ENCODE measurements at regions of chr2 and their contacts with region 1.

Region 1: GRCh38 chr2:210195101-210195852 is 24.1 kb upstream of the KANSL1L start:
- DNase-seq: peak; percentile 54
- H3K4me3 ChIP-seq: peak overlapping the region in 3 of 4 donors; percentile 19 to 32 (median 30)
- H3K27ac ChIP-seq: no peak overlapping the region
- H3K4me1 ChIP-seq: peaks cover 0 to 6% (median 3%) of the 10 kb centered on the region in 4 donors
- H3K27me3 ChIP-seq: no peaks in the 10 kb centered on the region
- CTCF ChIP-seq: peak; percentile 10 to 76 (median 62)
- EP300 ChIP-seq: no peak
- POLR2A ChIP-seq: no peak

Region 2: GRCh38 chr2:209334198-209335017 is 860.9 kb before region 1 on chr2:
- intact Hi-C with region 1: loop called (anchors 10 kb)
- DNase-seq: no peak
- H3K4me3 ChIP-seq: no peak overlapping the region
- H3K27ac ChIP-seq: no peak overlapping the region
- H3K4me1 ChIP-seq: peaks cover 0 to 5% (median 2%) of the 10 kb centered on the region in 4 donors
- H3K27me3 ChIP-seq: no peaks in the 10 kb centered on the region
- CTCF ChIP-seq: peak in 3 of 4 experiments; percentile 49 to 81 (median 55)
- EP300 ChIP-seq: no peak
- POLR2A ChIP-seq: no peak

Region 3: GRCh38 chr2:209423562-209424198 is 771.6 kb before region 1 on chr2 and contains the start of gene MAP2:
- intact Hi-C with region 1: loop called (anchors 10 kb)
- DNase-seq: peak; percentile 86
- H3K4me3 ChIP-seq: peak within 1 kb of the TSS; percentile 40 to 60 (median 55)
- H3K27ac ChIP-seq: peak within 1 kb of the TSS in 2 of 4 donors; percentile 35 to 64
- H3K4me1 ChIP-seq: peaks cover 0 to 17% (median 15%) of the 10 kb centered on the region in 4 donors
- H3K27me3 ChIP-seq: no peaks in the 10 kb centered on the region
- CTCF ChIP-seq: peak; percentile 17 to 88 (median 36)
- EP300 ChIP-seq: no peak
- POLR2A ChIP-seq: no peak
- total RNA-seq, gene MAP2: 8.4 to 21.8 (median 13.0) TPM

Region 4: DNA sequence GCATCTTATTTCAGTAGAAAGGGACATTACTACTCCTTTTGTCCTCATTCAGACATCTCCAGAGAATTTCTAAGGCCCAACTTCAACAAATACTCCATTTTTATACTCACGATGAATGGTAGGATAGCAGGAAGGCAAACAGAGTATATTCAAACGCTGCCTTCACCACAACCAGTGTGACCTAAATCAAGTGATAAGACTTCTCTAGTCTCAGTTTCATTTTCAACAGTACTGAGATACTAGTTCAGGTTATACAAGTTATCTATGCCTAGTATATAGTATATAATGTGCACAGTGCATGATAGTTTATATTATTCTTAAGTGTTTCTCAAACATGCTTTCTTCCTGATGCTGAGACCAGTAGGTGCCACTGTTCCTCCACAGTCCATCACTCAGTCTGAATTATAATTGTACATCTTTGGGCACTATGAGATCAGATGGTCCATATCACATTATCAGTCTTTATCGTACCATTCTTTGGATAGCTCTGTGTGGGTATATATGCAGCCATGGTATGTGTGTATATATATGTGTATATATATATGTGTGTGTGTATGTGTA is 259.1 kb before region 1 on chr2:
- intact Hi-C with region 1: loop called (anchors 5 kb)
- DNase-seq: no peak
- H3K4me3 ChIP-seq: no peak overlapping the region
- H3K27ac ChIP-seq: no peak overlapping the region
- H3K4me1 ChIP-seq: peaks cover 0 to 14% (median 9%) of the 10 kb centered on the region in 4 donors
- H3K27me3 ChIP-seq: no peaks in the 10 kb centered on the region
- CTCF ChIP-seq: peak in 1 of 4 experiments; percentile 5
- EP300 ChIP-seq: no peak
- POLR2A ChIP-seq: no peak

Region 5: DNA sequence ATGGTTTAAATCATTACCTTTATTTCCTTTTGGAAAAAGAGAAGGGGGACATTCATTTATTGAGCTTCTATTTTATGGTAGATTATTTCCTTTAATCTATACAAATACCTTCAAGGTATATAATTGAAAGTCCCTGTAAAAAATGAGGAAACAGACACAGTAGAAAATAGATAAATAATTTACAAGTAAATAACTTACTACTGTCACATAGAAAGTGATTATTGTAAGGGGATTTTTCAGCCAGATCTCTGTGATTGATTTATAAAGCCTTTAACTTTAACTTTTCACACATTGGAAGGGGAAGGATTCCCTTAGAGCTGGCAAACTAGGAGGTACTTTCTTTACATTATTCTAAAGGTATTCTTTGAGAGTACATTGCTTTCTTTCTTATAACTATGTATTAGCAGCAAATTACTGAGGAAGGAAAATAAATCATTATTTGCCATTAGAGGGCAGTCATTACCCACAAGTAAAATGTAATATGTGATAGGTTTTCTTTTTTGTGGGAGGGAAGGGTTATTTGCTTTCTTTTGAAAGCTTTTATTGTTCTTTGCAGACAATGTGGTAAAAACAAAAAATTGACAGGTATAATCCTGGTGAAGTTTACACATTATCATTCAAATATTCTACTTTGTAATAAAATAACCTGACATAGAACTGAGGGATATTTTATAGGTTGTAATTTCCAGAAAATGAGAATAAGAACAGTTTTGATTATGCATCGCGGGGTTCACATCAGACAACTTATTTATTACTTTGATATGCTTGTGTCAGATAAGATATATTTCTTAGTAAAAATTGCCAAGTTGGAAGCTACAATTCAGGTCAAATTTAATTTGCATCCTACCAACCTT is 217.7 kb before region 1 on chr2:
- intact Hi-C with region 1: loop called (anchors 1 kb)
- DNase-seq: no peak
- H3K4me3 ChIP-seq: no peak overlapping the region
- H3K27ac ChIP-seq: no peak overlapping the region
- H3K4me1 ChIP-seq: peaks cover 0 to 16% (median 10%) of the 10 kb centered on the region in 4 donors
- H3K27me3 ChIP-seq: no peaks in the 10 kb centered on the region
- CTCF ChIP-seq: peak in 3 of 4 experiments; percentile 28 to 52 (median 39)
- EP300 ChIP-seq: no peak
- POLR2A ChIP-seq: no peak

Region 6: GRCh38 chr2:210072922-210073509 is 122.3 kb before region 1 on chr2:
- intact Hi-C with region 1: loop called (anchors 5 kb)
- DNase-seq: no peak
- H3K4me3 ChIP-seq: no peak overlapping the region
- H3K27ac ChIP-seq: no peak overlapping the region
- H3K4me1 ChIP-seq: no peaks in the 10 kb centered on the region
- H3K27me3 ChIP-seq: no peaks in the 10 kb centered on the region
- CTCF ChIP-seq: peak in 3 of 4 experiments; percentile 33 to 50 (median 34)
- EP300 ChIP-seq: no peak
- POLR2A ChIP-seq: no peak

Region 7: DNA sequence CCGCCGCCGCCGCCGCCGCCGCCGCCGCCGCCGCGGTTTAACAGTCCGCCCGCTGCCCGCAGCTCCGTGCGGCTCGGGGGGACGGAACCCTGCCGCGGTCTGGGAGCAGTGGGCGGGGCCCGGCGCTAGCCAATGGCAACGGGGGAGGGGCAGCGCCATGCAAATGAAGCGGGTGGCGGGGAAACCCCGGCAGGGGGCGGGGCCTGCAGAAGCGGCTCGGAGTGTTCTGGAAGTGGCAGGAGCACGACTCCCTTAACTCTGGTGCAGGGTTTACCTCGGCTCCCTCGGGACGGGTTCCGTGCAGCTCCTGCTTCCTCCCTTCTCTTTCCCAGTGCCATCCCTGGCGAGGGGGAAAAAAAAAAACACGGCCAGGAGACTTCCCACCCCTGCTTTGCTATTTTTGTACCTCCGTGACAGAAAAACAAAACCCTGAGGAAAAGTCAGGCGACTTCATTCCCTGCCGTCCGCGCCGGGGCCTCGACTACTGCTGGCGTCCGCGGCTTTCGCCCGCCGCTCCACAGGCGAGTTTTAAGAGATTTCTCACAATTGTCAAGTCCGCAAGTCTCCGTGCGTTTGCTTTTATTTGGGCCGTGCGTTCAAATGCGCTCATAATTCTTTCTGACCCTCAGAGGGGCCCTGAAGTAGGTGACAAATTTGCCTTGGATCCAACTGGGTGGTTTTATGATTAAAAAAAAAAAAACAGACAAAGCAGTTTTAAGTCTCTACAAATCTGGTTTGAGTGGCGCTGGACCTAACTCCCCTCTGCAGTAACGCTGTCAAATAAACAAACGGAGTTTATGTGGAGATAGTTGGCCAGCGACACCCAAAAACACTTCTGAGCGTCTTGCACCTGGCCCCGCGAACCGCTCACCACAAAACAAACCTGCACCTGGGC is 23.7 kb before region 1 on chr2 and contains the start of gene KANSL1L:
- intact Hi-C with region 1: loop called (anchors 2 kb)
- DNase-seq: peak; percentile 100
- H3K4me3 ChIP-seq: peak within 1 kb of the TSS; percentile 76 to 98 (median 94)
- H3K27ac ChIP-seq: peak within 1 kb of the TSS; percentile 99 to 100 (median 100)
- H3K4me1 ChIP-seq: peaks cover 0 to 39% (median 32%) of the 10 kb centered on the region in 4 donors
- H3K27me3 ChIP-seq: no peaks in the 10 kb centered on the region
- CTCF ChIP-seq: no peak
- EP300 ChIP-seq: peak in 1 of 4 donors; percentile 17
- POLR2A ChIP-seq: peak; percentile 46 to 75
- total RNA-seq, gene KANSL1L: 32.6 to 49.0 (median 47.0) TPM